Heart left ventricle (tissue), 16 donors: ENCODE measurements at regions of chrX and their contacts with region 1.

Region 1: GRCh38 chrX:50402881-50403280 is 67.7 kb downstream of the DGKK start:
- DNase-seq: no peak
- ATAC-seq: no peak
- H3K4me3 ChIP-seq: no peak overlapping the region
- H3K27ac ChIP-seq: no peak overlapping the region
- H3K4me1 ChIP-seq: no peaks in the 10 kb centered on the region
- H3K27me3 ChIP-seq: peaks cover 0 to 17% (median 0%) of the 10 kb centered on the region in 9 donors
- CTCF ChIP-seq: no peak
- POLR2A ChIP-seq: no peak

Region 2: GRCh38 chrX:50343917-50344316 is 59.0 kb before region 1 on chrX:
- intact Hi-C with region 1: loop called in 1 of 10 experiments (anchors 10 kb)
- DNase-seq: no peak
- ATAC-seq: no peak
- H3K4me3 ChIP-seq: no peak overlapping the region
- H3K27ac ChIP-seq: no peak overlapping the region
- H3K4me1 ChIP-seq: no peaks in the 10 kb centered on the region
- H3K27me3 ChIP-seq: peaks cover 0 to 6% (median 0%) of the 10 kb centered on the region in 9 donors
- CTCF ChIP-seq: no peak
- POLR2A ChIP-seq: no peak

Region 3: GRCh38 chrX:50680990-50681389 is 278.1 kb after region 1 on chrX:
- intact Hi-C with region 1: no loop called
- DNase-seq: no peak
- ATAC-seq: no peak
- H3K4me3 ChIP-seq: no peak overlapping the region
- H3K27ac ChIP-seq: no peak overlapping the region
- H3K4me1 ChIP-seq: peaks cover 0 to 6% (median 0%) of the 10 kb centered on the region in 12 donors
- H3K27me3 ChIP-seq: peaks cover 0 to 31% (median 0%) of the 10 kb centered on the region in 9 donors
- CTCF ChIP-seq: peak in 11 of 12 donors; percentile 22 to 58 (median 42)
- POLR2A ChIP-seq: no peak